ENCODE measurements at regions of chr11 and their contacts with region 1.

Region 1: DNA sequence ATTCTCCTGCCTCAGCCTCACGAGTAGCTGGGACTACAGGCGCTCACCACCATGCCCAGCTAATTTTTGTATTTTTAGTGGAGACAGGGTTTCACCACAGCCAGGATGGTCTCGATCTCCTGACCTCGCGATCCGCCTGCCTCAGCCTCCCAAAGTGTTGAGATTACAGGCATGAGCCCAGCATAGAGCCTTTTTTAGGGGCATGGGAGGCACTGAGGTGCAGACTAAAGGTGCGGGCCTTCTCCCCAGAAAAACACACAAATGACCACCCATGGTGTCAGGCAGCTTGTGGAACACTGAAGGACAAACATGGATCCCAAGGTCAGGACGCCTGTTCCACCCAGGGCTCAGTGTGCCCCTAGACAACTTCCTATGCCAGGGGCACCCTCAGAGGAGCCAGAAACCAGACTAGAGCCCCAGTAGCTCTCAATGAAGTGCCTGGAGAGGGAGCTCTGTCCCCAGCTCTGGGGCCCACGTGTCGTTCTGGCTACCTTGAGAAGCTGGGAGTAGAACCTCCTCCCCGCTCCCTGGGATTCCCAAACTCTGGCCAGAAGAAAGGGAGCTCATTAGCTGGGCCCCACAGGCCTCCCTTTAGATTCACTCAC is 21.2 kb upstream of the CD5 start:
- DNase-seq: no peak
- ATAC-seq: no peak
- H3K4me3 ChIP-seq: no peak overlapping the region
- H3K4me3 Mint-ChIP-seq: no peak overlapping the region
- H3K27ac ChIP-seq: no peak overlapping the region
- H3K27ac Mint-ChIP-seq: no peak overlapping the region
- H3K4me1 ChIP-seq: peaks cover 0 to 6% of the 10 kb centered on the region in 2 donors
- H3K4me1 Mint-ChIP-seq: peaks cover 4% of the 10 kb centered on the region
- H3K27me3 ChIP-seq: no peaks in the 10 kb centered on the region
- H3K27me3 Mint-ChIP-seq: no peaks in the 10 kb centered on the region
- CTCF ChIP-seq: no peak

Region 2: DNA sequence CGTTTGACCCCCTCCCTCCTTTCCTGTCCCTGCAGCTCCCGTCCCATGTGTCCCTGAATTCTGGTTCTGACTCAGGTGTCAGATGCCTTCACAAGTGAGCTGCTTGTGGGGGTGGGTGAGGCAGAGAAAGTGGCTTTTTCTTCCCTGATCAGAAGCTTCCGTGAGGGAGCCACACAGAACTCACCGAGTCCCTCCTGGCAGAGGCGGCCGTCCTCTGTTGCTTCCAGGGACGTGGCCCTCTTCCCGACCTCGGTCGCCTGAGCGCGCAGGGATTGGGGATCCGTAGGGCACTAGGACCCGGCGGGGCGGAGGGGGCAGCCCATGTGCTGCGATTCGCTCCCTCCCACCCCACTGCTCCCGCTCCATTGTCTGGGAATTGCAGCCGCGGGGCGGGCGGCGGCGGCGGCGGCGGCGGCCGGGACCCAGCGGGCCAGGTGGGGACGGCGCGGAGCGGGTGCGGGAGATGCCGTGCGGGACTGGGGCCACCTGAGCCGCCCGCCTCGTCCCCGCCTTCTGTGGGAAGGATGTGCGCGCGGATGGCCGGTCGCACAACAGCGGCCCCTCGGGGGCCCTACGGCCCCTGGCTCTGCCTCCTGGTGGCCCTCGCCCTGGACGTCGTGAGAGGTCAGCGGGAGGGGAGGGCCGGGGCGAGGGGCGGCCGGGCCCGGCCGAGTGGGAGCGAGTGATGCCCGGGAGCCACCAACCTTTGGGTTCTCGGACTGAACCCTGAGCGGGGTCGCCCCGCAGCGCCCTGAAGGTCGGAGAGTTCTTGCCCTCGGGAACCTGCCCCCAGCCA is 156.8 kb before region 1 on chr11 and contains the start of gene TMEM132A:
- CTCF ChIA-PET with region 1: no interaction called
- POLR2A ChIA-PET with region 1: interaction called, 11 read pairs
- intact Hi-C with region 1: no loop called
- DNase-seq: peak; percentile 43
- ATAC-seq: peak; percentile 37
- H3K4me3 ChIP-seq: peak within 1 kb of the TSS in 4 of 5 experiments; percentile 40 to 69 (median 56)
- H3K4me3 Mint-ChIP-seq: peak within 1 kb of the TSS; percentile 82
- H3K27ac ChIP-seq: no peak within 1 kb of the TSS
- H3K27ac Mint-ChIP-seq: no peak within 1 kb of the TSS
- H3K4me1 ChIP-seq: peaks cover 32 to 37% of the 10 kb centered on the region in 2 donors
- H3K4me1 Mint-ChIP-seq: peaks cover 33% of the 10 kb centered on the region
- H3K27me3 ChIP-seq: peaks cover 0 to 30% (median 7%) of the 10 kb centered on the region in 4 experiments
- H3K27me3 Mint-ChIP-seq: peaks cover 7% of the 10 kb centered on the region
- CTCF ChIP-seq: no peak
- total RNA-seq, gene TMEM132A: 11.3 and 13.8 TPM in 2 replicates

Region 3: DNA sequence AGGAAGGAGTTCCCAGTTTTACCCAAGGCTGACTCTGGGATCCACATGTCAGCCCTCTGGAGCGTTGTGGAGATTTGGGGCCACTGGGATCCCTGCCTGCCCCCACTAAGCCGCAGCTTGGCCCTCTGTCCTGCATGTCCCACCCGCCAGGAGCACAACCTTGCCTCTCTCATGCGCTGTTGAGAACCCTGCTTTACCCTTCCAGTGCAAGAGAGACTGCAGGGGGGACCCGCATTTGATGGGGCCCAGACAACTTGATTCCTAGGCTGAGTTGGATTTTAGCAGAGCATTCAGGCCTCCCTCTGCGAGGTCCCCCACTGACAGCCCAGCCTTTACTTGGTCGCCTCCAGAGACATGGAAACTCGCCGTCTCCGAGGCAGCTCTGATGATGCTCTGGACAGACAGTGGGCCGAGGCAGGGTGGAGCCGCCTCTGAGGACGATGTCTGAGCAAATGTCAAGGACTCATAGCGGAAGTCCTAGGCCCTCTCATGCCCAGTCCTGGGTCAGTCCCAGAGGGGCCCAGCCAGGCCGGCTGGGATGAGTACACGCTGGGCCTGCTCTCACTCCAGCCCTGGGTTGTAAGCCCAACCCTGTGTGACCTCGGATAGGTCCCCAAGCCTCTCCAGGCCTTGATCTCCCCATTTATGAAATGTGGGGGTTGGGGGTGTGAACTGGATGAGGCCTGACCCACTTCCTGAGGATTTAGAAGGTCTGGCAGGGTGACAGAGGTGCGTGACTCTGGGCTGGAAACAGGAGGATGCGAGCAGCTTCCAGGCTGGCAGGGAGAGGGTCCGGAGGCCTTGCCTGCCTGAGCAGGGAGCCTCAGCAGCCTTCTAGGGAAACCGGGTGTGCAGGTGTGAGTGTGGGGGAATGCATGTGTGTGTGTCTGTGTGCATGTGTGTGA is 21.8 kb after region 1 on chr11:
- CTCF ChIA-PET with region 1: no interaction called
- POLR2A ChIA-PET with region 1: no interaction called
- intact Hi-C with region 1: no loop called
- DNase-seq: no peak
- ATAC-seq: no peak
- H3K4me3 ChIP-seq: peak overlapping the region; percentile 1 to 44 (median 16)
- H3K4me3 Mint-ChIP-seq: peak overlapping the region; percentile 64
- H3K27ac ChIP-seq: peak overlapping the region; percentile 49 to 66
- H3K27ac Mint-ChIP-seq: peak overlapping the region; percentile 70
- H3K4me1 ChIP-seq: peaks cover 46 to 55% of the 10 kb centered on the region in 2 donors
- H3K4me1 Mint-ChIP-seq: peaks cover 10% of the 10 kb centered on the region
- H3K27me3 ChIP-seq: no peaks in the 10 kb centered on the region
- H3K27me3 Mint-ChIP-seq: no peaks in the 10 kb centered on the region
- CTCF ChIP-seq: no peak

Measured in B cell (primary cell).